ENCODE measurements at regions of chr2 and their contacts with region 1.

Region 1: GRCh38 chr2:16608661-16609643 is 56.7 kb downstream of the CYRIA start:
- H3K4me3 ChIP-seq: peak overlapping the region; percentile 41
- H3K27ac ChIP-seq: peak overlapping the region; percentile 18; the same call in 1 of the 2 replicates
- H3K4me1 ChIP-seq: peaks cover 3% of the 10 kb centered on the region; the same call in 1 of the 2 replicates
- CTCF ChIP-seq: peak; percentile 58

Region 2: DNA sequence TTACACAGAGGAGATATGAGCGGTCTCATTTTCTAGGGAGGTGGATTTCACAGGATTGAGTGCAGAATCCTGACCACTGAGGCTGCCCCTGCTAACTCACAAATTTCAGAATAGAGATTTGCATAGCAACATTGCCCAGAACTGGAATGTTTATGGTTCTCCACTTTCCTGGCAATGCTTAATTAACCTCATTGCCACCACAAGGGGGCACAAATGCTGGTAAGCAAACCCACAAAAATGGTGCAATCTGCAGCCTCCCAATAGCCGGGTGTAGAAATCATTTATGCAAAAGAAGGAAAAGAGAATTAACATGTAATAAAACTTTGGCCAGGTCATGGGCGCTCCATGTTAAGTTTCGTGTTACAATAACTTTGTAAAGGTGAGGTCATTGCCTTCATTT is 55.7 kb before region 1 on chr2:
- CTCF ChIA-PET with region 1: interaction called, 37 read pairs
- POLR2A ChIA-PET with region 1: no interaction called
- H3K4me3 ChIP-seq: no peak overlapping the region
- H3K27ac ChIP-seq: no peak overlapping the region
- H3K4me1 ChIP-seq: no peaks in the 10 kb centered on the region
- CTCF ChIP-seq: no peak

Region 3: DNA sequence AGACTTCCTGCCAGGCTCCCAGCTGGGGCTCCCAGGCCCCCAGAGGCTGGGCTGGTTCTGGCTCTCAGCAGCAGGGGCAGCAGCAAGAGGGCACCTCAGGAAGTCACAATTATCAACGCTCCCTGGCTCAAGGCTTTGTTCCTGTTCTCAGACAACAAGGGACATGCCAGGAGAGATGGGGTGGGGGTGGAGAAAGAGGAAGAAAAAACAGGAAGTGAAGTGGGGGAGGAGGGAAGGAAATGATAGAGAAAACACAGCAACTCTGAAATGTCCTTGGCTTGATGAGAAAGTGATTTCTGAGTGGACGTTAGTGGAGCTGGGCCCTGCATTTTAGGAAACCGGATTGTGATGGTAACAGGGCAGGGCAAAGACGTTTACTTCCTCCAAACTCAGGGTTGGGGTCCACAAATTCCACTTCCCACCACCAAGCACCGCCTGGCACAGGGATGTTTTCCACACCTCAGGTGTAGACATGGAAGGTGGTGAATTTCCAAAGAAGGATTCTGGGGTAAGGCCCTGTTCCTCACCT is 16.3 kb after region 1 on chr2:
- CTCF ChIA-PET with region 1: interaction called, 20 read pairs
- POLR2A ChIA-PET with region 1: interaction called, 4 read pairs
- H3K4me3 ChIP-seq: no peak overlapping the region
- H3K27ac ChIP-seq: no peak overlapping the region
- H3K4me1 ChIP-seq: no peaks in the 10 kb centered on the region
- CTCF ChIP-seq: no peak

Region 4: DNA sequence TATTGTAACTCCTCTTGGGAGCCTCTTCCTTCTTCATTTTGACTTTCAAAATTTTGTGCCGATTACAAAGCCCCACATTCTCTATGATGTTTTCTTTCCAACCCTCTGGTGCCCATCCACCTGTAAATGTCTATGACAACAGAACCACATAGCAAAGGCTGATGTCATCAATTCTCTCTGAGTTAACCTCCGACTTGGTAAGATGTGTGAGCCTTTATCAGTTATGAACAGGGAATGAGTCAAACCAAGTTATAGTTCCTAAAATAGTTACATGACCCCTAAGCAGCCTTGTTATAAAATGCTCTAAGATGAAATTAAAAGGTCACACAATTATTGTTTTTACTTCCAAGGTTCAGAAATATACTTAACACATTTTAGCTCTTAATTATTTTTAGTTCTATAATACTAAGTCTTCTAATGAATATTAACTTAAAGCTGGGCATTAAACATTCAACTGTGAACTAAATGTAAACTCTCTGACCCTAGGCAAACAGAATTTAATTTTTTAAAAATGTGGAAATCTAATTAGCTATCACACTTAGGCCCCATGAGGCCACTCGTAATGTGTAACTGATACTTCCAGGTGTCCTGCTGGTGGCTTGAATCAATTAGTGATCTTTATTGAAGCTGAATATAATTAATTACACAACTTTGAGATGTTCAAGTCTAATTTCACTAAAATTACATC is 159.0 kb after region 1 on chr2:
- CTCF ChIA-PET with region 1: interaction called, 15 read pairs
- POLR2A ChIA-PET with region 1: no interaction called
- H3K4me3 ChIP-seq: no peak overlapping the region
- H3K27ac ChIP-seq: no peak overlapping the region
- H3K4me1 ChIP-seq: no peaks in the 10 kb centered on the region
- CTCF ChIP-seq: no peak

Measured in HEK293 (cell line).